Dorsolateral prefrontal cortex (tissue), 120 donors: ENCODE measurements at regions of chr1 and their contacts with region 1.

Region 1: DNA sequence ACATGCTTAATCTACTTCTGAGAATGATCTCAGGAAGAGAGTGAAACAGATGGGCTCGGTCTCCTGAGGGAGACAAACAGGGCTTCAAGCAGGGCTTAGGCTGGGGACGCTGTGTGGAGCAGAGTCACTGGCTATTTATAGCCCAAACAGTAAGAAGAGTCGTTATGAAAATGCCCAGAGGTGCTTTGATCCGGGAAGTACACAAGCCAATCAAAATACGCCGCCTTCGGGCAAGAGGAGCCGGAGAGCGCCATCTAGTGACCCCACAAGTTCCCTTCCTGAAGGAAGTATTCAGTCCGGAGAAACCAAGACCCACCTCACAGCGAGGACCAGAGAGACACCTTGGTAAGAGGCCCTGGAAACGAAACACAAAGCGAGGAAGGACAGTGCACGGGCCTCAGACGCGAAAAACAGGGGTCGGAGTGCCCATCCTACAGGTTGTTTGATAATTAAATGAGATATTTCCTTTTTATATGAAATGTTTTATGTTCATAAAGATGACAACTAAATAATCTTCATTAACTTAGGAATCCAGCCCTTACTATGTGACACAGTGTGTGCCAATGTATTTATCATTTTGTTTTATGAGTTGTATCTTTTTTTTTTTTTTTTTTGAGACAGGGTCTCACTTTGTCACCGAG is 25.0 kb upstream of the SCCPDH start:
- DNase-seq: peak; percentile 53 to 89 (median 80)
- H3K4me3 ChIP-seq: peak overlapping the region in 51 of 59 donors; percentile 5 to 69 (median 46)
- H3K27ac ChIP-seq: peak overlapping the region in 20 of 59 donors; percentile 1 to 84 (median 46)
- H3K27me3 ChIP-seq: no peaks in the 10 kb centered on the region
- CTCF ChIP-seq: peak; percentile 69 to 95 (median 84)

Region 2: GRCh38 chr1:246497331-246497915 is 201.8 kb before region 1 on chr1:
- intact Hi-C with region 1: loop called in 1 of 2 experiments (anchors 2 kb)
- DNase-seq: no peak
- H3K4me3 ChIP-seq: no peak overlapping the region
- H3K27ac ChIP-seq: no peak overlapping the region
- H3K27me3 ChIP-seq: no peaks in the 10 kb centered on the region
- CTCF ChIP-seq: peak; percentile 49 to 92 (median 77)

Region 3: GRCh38 chr1:246513619-246514343 is 185.4 kb before region 1 on chr1:
- intact Hi-C with region 1: loop called in 1 of 2 experiments (anchors 5 kb)
- DNase-seq: no peak
- H3K4me3 ChIP-seq: no peak overlapping the region
- H3K27ac ChIP-seq: no peak overlapping the region
- H3K27me3 ChIP-seq: no peaks in the 10 kb centered on the region
- CTCF ChIP-seq: no peak

Region 4: DNA sequence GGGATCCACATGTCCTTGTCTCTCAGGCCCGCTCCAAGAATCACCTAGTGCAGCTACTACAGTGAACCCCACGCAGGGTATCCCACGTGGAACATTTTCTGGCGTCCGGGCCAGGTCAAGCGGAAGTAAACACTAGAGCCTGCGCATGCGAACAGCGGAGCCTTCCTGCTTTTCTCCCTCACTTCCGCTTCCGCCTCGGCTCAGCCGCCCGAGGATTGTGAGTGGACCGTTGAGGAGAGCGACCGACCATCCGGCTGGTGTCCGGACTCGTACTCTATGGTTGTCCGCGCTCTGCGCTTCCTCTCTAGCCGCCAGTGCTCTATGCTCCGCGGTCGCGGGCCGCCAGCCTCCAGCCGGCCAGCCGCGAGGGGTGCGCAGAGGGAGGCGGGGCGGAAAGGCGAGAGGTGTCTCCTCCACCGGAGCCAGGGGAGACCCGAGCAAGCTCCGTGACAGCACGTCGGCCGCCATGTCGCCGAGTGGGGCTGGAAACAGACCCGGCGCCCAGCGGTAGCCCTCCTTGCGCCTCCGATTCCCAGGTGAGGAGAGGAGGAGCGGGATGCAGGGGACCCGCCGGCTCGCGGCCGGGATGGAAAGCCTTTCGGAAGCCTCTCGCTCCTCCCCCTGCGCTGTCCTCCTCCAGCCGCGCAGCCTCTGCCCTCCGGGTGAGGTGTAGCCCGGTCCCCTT is 132.9 kb before region 1 on chr1 and contains the starts of genes CNST and TFB2M:
- intact Hi-C with region 1: loop called in 1 of 2 experiments (anchors 10 kb)
- DNase-seq: peak; percentile 92 to 98 (median 96)
- H3K4me3 ChIP-seq: peak within 1 kb of the TSS; percentile 64 to 100 (median 95)
- H3K27ac ChIP-seq: peak within 1 kb of the TSS; percentile 30 to 98 (median 91)
- H3K27me3 ChIP-seq: no peaks in the 10 kb centered on the region
- CTCF ChIP-seq: peak in 48 of 56 donors; percentile 7 to 67 (median 37)
- total RNA-seq, gene CNST: 23.5 to 69.8 (median 45.5) TPM
- total RNA-seq, gene TFB2M: 3.5 to 11.0 (median 7.7) TPM

Region 5: DNA sequence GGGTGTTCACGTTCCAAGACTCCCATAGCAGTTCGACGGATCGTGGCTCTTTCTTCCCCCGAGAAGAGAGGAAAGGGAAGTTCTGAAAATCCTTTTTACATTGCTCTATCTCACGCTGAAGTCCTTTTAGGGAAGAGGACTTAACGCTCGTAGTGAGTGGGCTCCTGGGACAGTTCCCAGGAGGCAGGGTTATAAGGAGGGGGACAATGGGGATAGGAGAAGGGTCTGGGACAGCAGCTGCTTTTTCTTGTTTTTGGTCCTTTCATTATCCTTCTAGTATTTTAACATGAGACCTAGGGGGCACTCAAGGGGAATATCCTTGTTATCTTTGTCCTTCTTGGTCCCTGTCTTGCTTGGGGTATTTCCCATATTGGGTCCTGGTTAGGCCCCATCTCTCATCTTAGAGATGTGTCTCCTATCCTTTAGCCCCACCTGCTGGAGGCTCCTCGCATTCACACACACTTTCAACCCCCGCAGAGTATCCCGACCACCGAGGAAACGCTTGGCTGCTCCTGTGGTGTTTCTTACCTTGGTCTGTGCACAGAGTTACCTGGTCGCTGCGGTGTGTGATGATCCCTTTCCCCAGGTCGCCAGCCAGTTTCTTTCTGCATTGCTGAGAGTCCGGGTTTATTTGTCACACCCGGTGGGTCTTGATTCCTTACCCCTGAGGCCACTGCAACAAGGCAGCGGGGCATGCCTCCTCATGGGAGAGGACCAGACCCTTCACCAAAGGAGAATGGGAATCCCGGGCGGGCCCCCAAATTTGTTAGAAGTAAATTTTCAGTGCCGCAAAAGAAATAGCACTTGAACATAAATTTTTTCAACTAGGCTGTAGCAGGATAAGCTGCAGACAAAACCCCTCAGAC is 54.7 kb after region 1 on chr1:
- intact Hi-C with region 1: loop called in 1 of 2 experiments (anchors 10 kb)
- DNase-seq: peak in 7 of 10 donors; percentile 46 to 68 (median 58)
- H3K4me3 ChIP-seq: no peak overlapping the region
- H3K27ac ChIP-seq: no peak overlapping the region
- H3K27me3 ChIP-seq: no peaks in the 10 kb centered on the region
- CTCF ChIP-seq: peak in 55 of 56 donors; percentile 47 to 88 (median 76)

Region 6: DNA sequence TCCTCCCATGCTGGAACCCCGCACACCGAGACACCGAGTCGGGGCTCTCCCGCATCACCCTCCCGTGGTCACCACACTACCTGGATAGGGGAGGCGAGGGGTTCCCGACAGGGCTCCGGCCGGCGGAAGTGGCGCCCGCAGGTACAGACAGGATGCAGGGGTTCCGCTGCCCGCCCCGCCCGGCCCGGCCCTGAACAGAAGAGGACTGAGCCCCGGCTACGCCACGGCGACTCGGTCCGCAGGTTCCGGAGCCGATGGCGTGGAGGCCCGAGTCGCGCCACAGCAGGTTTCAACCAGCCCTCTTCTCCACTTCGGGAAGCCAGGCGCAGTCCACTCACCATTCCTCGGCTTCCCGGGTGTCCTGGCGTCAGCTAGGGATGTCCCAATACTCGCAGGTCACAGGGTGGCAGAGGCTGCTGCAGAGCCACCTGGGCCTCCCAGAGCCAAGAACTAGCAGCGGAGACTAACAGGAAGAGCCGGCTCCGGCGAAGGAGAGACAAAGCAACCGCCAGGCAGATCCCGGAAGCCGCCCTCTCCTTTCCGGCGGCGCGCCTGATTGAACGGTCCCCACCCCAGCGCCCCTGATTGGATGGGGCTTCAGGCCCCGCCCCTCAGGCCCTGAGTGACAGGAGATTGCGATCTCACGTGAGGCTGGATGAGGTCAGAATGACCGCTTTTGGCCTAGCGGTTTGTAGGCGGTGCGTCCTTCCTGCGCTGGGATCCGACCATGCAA is 404.8 kb after region 1 on chr1 and contains the start of gene ZNF669:
- intact Hi-C with region 1: no loop called
- DNase-seq: peak; percentile 95 to 98 (median 98)
- H3K4me3 ChIP-seq: peak within 1 kb of the TSS; percentile 67 to 98 (median 90)
- H3K27ac ChIP-seq: peak within 1 kb of the TSS in 55 of 59 donors; percentile 37 to 93 (median 77)
- H3K27me3 ChIP-seq: no peaks in the 10 kb centered on the region
- CTCF ChIP-seq: peak in 24 of 56 donors; percentile 2 to 47 (median 22)
- total RNA-seq, gene ZNF669: 4.1 to 11.4 (median 7.1) TPM